Esophagus squamous epithelium (tissue), 5 donors: ENCODE measurements at regions of chr22 and their contacts with region 1.

Region 1: GRCh38 chr22:41091132-41092022 is 1.0 kb upstream of the EP300 start:
- DNase-seq: peak; percentile 96
- H3K4me3 ChIP-seq: peak overlapping the region; percentile 86 to 100 (median 94)
- H3K27ac ChIP-seq: peak overlapping the region; percentile 100
- H3K4me1 ChIP-seq: peaks cover 0 to 41% (median 8%) of the 10 kb centered on the region in 3 donors
- H3K27me3 ChIP-seq: no peaks in the 10 kb centered on the region
- CTCF ChIP-seq: peak in 2 of 6 experiments; percentile 3 to 5
- POLR2A ChIP-seq: peak in 3 of 4 donors; percentile 91 to 93 (median 92)

Region 2: GRCh38 chr22:40950962-40951794 is 140.2 kb before region 1 on chr22 and contains the start of gene RBX1:
- intact Hi-C with region 1: loop called (anchors 5 kb)
- DNase-seq: peak; percentile 94
- H3K4me3 ChIP-seq: peak within 1 kb of the TSS; percentile 73 to 89 (median 86)
- H3K27ac ChIP-seq: peak within 1 kb of the TSS; percentile 91 to 99 (median 98)
- H3K4me1 ChIP-seq: peaks cover 11 to 48% (median 16%) of the 10 kb centered on the region in 3 donors
- H3K27me3 ChIP-seq: no peaks in the 10 kb centered on the region
- CTCF ChIP-seq: no peak
- POLR2A ChIP-seq: peak in 3 of 4 donors; percentile 63 to 92 (median 91)
- total RNA-seq, gene RBX1: 32.7 to 64.0 (median 52.4) TPM

Region 3: DNA sequence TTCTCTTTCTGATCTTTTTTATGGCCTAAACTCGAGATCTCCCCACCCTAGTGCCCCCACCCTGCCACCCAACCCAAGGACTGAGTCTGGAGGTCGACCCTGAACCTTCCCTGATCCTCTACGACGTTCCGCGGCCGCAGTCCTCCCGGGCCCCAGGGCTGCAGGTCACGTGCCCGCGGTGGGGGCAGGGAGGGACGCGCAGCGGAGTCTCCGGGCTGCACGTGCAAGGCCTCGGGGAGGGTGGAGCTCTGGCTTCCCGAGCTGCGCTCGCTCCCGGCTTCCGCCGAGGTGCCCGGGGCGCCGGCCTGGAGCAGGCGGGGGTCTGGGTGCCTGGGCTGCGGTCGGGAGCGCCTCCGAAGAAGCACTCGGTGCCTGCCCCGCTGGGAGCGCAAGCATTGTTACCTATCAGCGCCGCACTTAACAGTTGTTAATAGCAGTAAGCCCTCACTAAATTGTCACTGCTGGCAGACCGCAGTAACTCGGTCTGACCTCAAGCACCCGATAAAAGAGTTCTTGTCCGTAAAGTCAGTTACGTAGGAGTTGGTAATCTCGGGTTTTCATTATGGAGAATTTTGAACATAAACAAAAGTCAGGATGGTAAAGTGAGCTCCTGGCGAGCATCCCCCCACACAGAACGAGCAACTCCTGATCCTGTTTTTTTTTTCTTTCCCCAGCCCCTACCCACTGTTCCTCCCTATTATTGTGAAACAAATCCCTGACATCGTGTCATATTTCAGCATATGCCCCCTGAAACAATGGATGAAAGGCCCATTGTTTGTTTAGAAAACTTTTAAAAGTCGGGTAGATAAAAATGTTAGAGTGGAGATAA is 68.7 kb before region 1 on chr22:
- intact Hi-C with region 1: loop called (anchors 5 kb)
- DNase-seq: peak; percentile 45
- H3K4me3 ChIP-seq: peak overlapping the region; percentile 66 to 88 (median 76)
- H3K27ac ChIP-seq: peak overlapping the region; percentile 96 to 100 (median 98)
- H3K4me1 ChIP-seq: peaks cover 0 to 17% (median 5%) of the 10 kb centered on the region in 3 donors
- H3K27me3 ChIP-seq: no peaks in the 10 kb centered on the region
- CTCF ChIP-seq: peak in 1 of 6 experiments; percentile 4
- POLR2A ChIP-seq: peak in 3 of 4 donors; percentile 9 to 79 (median 77)